ENCODE measurements at regions of chr11 and their contacts with region 1.

Region 1: GRCh38 chr11:117946842-117947526 is 17.8 kb upstream of the TMPRSS13 start:
- DNase-seq: peak; percentile 82 to 93 (median 90)
- H3K4me3 ChIP-seq: no peak overlapping the region
- H3K27ac ChIP-seq: peak overlapping the region in 1 of 59 donors; percentile 44
- H3K27me3 ChIP-seq: peaks cover 0 to 2% (median 0%) of the 10 kb centered on the region in 45 donors
- CTCF ChIP-seq: peak; percentile 89 to 100 (median 98)

Region 2: DNA sequence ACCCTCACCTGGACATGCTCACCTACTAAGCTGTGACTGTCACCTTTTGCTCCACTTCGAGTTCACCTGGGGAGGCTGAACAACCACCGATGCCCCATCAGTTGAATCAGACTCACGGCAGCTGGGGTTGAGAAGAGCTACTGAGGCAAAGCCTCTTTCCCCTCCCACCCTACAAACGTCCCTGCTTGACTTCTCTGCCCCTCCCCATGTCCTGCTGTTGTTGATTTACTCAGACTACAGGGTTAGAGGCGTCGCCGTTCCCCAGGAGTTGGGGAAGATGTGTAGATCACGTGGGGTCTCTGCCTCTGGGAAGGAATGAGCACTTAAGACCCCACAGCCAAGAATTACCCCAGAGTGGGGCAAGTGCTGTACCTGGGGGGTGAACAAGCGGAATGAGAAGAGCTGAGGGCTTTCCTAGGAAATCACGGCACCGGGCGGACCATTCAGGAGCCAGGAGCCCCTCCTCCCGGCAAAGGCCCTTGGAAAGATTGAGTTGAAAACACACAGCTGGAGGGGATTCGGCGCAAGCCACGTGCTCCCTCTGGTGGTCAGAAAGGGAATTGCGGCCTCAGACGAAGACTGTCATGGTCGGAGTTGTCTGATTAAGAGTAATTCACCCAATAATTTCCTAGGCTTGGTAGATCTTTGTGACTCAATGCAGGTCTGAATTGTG is 129.5 kb before region 1 on chr11:
- intact Hi-C with region 1: loop called in 1 of 2 experiments (anchors 5 kb)
- DNase-seq: peak; percentile 74 to 94 (median 90)
- H3K4me3 ChIP-seq: peak overlapping the region in 23 of 59 donors; percentile 1 to 51 (median 25)
- H3K27ac ChIP-seq: peak overlapping the region in 1 of 59 donors; percentile 75
- H3K27me3 ChIP-seq: peaks cover 0 to 5% (median 0%) of the 10 kb centered on the region in 45 donors
- CTCF ChIP-seq: peak; percentile 98 to 100 (median 100)

Region 3: DNA sequence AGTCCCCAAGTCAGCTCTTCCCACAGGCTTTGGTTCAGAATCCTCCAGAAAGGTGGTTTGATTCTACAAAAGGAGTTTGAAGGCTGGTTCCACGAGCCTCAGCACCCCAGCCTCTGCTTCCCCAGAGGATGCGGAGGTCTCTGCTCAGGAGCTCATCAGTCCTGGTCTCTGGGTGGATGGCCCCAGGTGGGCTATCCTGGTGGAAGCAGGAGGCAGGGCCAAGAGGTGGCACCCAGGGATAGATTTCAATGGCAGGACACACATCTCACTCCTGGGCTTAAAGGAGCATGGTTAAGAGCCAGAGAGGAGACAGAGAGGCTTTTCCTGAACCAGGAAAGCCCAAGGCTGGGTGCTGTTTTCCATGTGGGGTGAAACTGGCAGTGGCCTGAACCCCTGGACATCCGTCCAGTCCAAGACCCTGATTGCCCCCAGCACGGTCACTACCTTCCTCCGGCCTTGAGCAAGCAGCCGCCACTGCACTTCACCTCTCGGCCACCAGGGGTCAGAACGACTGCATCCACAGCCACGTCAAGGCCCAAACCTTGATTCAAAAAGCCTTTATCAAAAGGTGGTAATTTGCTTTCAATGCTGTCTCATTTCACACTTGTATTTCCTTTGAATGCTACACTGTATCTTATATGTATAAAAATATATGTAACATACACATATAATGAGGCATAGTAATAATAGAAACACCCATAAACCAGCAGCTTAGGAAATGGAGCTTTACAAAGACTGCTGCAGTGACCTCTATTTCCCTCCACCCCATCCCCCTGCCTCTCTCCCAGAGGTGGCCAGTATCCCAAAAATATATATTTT is 103.1 kb before region 1 on chr11:
- intact Hi-C with region 1: loop called (anchors 1 to 2 kb)
- DNase-seq: peak; percentile 69 to 90 (median 86)
- H3K4me3 ChIP-seq: no peak overlapping the region
- H3K27ac ChIP-seq: peak overlapping the region in 14 of 59 donors; percentile 1 to 41 (median 20)
- H3K27me3 ChIP-seq: no peaks in the 10 kb centered on the region
- CTCF ChIP-seq: peak; percentile 96 to 100 (median 99)

Region 4: DNA sequence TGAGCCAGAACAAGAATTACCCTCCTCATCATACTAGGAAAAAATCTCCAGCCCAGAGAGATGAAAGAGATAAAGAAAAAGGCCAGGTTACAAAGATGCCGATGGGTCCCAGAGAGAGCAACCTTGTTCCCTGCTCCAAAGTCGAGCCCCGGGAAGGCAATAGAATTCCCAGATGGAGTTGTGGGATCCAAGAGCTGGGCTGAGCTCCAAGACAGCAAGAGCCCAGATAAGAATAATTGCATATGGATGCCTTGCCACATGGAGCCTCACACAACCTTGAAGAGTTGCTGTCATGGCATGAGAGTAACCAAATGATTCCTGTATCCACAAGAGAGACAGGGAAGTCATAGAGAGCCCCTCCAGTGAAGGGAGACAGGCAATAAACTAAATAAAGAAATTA is 70.1 kb after region 1 on chr11:
- intact Hi-C with region 1: no loop called
- DNase-seq: no peak
- H3K4me3 ChIP-seq: no peak overlapping the region
- H3K27ac ChIP-seq: no peak overlapping the region
- H3K27me3 ChIP-seq: no peaks in the 10 kb centered on the region
- CTCF ChIP-seq: no peak